ENCODE measurements at regions of chr17 and their contacts with region 1.

Region 1: DNA sequence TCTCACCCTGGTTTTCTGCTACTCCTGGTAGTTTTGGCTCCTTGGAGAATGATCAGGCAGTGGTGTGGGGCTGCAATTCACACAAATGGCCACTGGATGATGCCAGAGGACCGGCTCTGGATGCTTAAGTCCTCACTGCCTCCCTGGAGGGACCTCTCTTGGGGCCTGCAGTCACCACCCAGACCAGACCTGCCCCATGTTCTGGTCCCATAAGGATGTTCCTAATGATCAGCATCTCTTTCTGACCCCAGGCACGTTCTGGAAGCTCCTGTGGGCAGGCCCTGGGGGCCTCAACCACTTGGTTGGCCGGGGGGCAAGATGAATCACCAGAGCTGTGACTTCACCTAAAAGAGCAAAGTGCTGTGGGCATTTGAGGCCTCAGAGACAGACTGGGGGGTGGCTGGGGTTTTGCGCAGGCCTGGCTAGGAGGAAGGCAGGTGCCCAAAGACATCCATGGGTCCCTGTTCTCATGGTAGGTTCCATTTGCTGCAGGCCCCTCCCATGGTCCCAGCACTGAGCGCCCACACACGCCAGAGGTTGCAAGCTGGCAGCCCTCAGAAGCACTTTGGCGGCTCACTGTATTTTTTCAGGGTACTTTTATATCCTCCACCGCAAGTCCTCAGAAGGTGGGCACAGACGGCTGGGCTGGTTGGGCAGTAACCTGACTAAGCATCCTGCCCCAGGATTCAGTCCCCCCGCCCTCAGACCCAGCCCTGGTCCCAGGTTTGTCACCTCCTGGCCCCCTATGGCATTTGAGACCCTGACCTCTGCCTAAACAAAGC is 53.2 kb downstream of the NT5M start:
- DNase-seq: peak; percentile 68 to 83
- H3K4me3 ChIP-seq: no peak overlapping the region
- H3K27ac ChIP-seq: no peak overlapping the region
- H3K4me1 ChIP-seq: peaks cover 0 to 10% (median 1%) of the 10 kb centered on the region in 4 experiments; a peak in 5 of 7 replicates
- H3K27me3 ChIP-seq: no peaks in the 10 kb centered on the region
- CTCF ChIP-seq: peak; percentile 97 to 100 (median 99)
- EP300 ChIP-seq: no peak
- POLR2A ChIP-seq: no peak
- RAD21 ChIP-seq: peak; percentile 100

Region 2: GRCh38 chr17:17344462-17345293 is 11.7 kb before region 1 on chr17:
- CTCF ChIA-PET with region 1: interaction called, 22 read pairs
- POLR2A ChIA-PET with region 1: no interaction called
- DNase-seq: peak in 1 of 2 experiments; percentile 33
- H3K4me3 ChIP-seq: no peak overlapping the region
- H3K27ac ChIP-seq: no peak overlapping the region
- H3K4me1 ChIP-seq: no peaks in the 10 kb centered on the region; a peak in 1 of 7 replicates
- H3K27me3 ChIP-seq: no peaks in the 10 kb centered on the region
- CTCF ChIP-seq: no peak
- EP300 ChIP-seq: no peak
- POLR2A ChIP-seq: no peak
- RAD21 ChIP-seq: no peak

Region 3: DNA sequence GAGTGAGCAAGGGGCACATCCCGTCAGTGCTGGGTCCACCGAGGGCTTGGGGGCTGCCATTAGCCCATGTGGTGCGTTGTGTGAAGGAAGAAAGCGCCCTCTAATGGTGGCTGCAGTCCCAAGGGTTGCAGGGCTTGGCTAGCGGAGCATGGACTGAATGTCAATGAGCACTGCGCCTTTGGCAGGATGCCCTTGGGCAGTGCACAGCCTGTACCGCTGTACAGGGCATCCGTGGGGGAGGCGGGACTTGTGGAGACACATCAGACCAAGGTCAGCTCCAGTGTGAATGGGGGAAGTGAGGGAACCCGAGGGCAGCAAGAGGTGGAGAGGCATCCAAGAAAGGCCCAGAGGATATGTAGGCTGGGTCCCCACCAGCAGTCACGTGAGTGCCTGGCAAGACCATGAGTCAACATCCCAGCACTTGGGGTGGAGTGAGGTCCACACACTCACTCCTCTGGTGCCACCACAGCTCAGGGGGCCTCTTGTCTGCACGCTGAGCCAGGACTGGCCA is 45.0 kb after region 1 on chr17:
- CTCF ChIA-PET with region 1: interaction called, 15 read pairs
- POLR2A ChIA-PET with region 1: no interaction called
- DNase-seq: peak; percentile 29 to 70
- H3K4me3 ChIP-seq: no peak overlapping the region
- H3K27ac ChIP-seq: no peak overlapping the region
- H3K4me1 ChIP-seq: peaks cover 0 to 5% (median 2%) of the 10 kb centered on the region in 4 experiments; a peak in 2 of 7 replicates
- H3K27me3 ChIP-seq: no peaks in the 10 kb centered on the region
- CTCF ChIP-seq: peak; percentile 75 to 92 (median 90)
- EP300 ChIP-seq: no peak
- POLR2A ChIP-seq: no peak
- RAD21 ChIP-seq: peak; percentile 65 to 77

Region 4: DNA sequence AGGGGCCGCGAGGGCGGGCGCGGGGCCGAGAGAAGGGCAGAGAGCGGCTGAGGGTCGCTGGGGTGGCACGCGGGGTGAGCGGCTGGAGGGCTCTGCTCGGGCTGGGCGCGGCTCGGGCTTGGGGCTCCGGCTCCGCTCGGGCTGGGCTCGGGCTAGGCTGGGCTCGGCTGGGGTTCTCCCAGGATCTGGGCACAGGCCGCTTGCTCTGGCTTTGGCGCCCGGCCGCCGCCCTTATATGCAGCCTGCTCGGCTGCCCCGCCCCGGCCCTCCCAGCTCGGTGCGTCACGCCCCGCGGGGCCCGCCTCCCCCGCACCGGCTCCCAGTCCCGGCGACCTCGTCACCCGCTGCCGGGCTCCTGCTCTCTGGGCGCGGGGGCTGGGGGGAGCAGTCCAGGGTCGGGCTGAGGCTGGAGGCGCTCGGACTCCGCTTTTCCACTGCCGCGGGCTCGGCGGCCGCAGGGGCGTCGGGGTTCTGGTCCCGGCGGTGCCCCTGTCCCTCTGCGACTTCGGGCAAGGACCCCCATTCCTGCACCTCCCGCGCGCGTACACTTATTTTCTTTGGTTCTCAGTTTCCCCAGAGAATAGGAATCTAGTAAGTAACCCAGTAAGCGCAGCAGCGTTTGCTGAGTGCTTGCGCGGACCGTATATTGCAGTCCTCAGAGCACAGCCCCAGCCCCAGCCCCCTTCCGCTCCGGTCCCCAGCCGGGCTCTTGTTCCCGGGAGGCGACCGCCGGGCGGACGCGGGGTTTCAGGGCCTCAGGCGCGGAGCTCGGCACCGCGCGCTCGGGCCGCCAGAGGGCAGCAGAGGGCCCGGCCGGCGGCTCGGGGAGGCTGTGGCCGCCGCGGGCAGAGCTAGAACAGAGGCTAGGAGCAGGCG is 140.1 kb after region 1 on chr17 and contains the start of gene RASD1:
- CTCF ChIA-PET with region 1: interaction called, 44 read pairs
- POLR2A ChIA-PET with region 1: interaction called, 13 read pairs
- DNase-seq: peak in 1 of 2 experiments; percentile 93
- H3K4me3 ChIP-seq: peak within 1 kb of the TSS; percentile 43 to 70 (median 59)
- H3K27ac ChIP-seq: no peak within 1 kb of the TSS
- H3K4me1 ChIP-seq: peaks cover 5 to 29% (median 22%) of the 10 kb centered on the region in 4 experiments
- H3K27me3 ChIP-seq: peaks cover 14 to 26% (median 22%) of the 10 kb centered on the region in 4 experiments; a peak in 6 of 7 replicates
- CTCF ChIP-seq: peak; percentile 78 to 97 (median 81)
- EP300 ChIP-seq: peak in 1 of 2 experiments; percentile 70; a peak in 1 of 3 replicates
- POLR2A ChIP-seq: peak in 1 of 2 experiments; percentile 98; a peak in 2 of 3 replicates
- RAD21 ChIP-seq: peak; percentile 71 to 93
- total RNA-seq, gene RASD1: 1.8 and 2.6 TPM in 2 replicates

Region 5: GRCh38 chr17:17568749-17569195 is 212.4 kb after region 1 on chr17:
- CTCF ChIA-PET with region 1: interaction called, 55 read pairs
- POLR2A ChIA-PET with region 1: no interaction called
- DNase-seq: peak; percentile 54 to 97
- H3K4me3 ChIP-seq: no peak overlapping the region
- H3K27ac ChIP-seq: no peak overlapping the region
- H3K4me1 ChIP-seq: peaks cover 0 to 13% (median 8%) of the 10 kb centered on the region in 4 experiments; a peak in 5 of 7 replicates
- H3K27me3 ChIP-seq: no peaks in the 10 kb centered on the region
- CTCF ChIP-seq: peak; percentile 91 to 98 (median 96)
- EP300 ChIP-seq: no peak
- POLR2A ChIP-seq: no peak
- RAD21 ChIP-seq: peak; percentile 83 to 85

Region 6: GRCh38 chr17:17595755-17596154 is 239.4 kb after region 1 on chr17:
- CTCF ChIA-PET with region 1: no interaction called
- POLR2A ChIA-PET with region 1: no interaction called
- DNase-seq: no peak
- H3K4me3 ChIP-seq: no peak overlapping the region
- H3K27ac ChIP-seq: no peak overlapping the region
- H3K4me1 ChIP-seq: peaks cover 0 to 4% (median 0%) of the 10 kb centered on the region in 4 experiments; a peak in 2 of 7 replicates
- H3K27me3 ChIP-seq: no peaks in the 10 kb centered on the region
- CTCF ChIP-seq: no peak
- EP300 ChIP-seq: no peak
- POLR2A ChIP-seq: no peak
- RAD21 ChIP-seq: no peak

Region 7: GRCh38 chr17:17641621-17642409 is 285.5 kb after region 1 on chr17:
- CTCF ChIA-PET with region 1: interaction called, 56 read pairs
- POLR2A ChIA-PET with region 1: no interaction called
- DNase-seq: peak; percentile 65 to 90
- H3K4me3 ChIP-seq: no peak overlapping the region
- H3K27ac ChIP-seq: no peak overlapping the region
- H3K4me1 ChIP-seq: no peaks in the 10 kb centered on the region
- H3K27me3 ChIP-seq: no peaks in the 10 kb centered on the region
- CTCF ChIP-seq: peak; percentile 87 to 96 (median 93)
- EP300 ChIP-seq: no peak
- POLR2A ChIP-seq: no peak
- RAD21 ChIP-seq: peak; percentile 99

Measured in H1 (cell line).